Calu3 (cell line): ENCODE measurements at regions of chr13 and their contacts with region 1.

Region 1: GRCh38 chr13:24650161-24650560 is 30.0 kb upstream of the ATP12A start:
- DNase-seq: no peak
- H3K4me3 Mint-ChIP-seq: no peak overlapping the region
- H3K27ac Mint-ChIP-seq: no peak overlapping the region
- H3K4me1 Mint-ChIP-seq: peaks cover 18% of the 10 kb centered on the region
- H3K27me3 Mint-ChIP-seq: no peaks in the 10 kb centered on the region
- CTCF ChIP-seq: no peak

Region 2: GRCh38 chr13:24630851-24631620 is 19.1 kb before region 1 on chr13:
- CTCF ChIA-PET with region 1: interaction called, 3 read pairs
- intact Hi-C with region 1: loop called (anchors 2 kb)
- DNase-seq: peak; percentile 65
- H3K4me3 Mint-ChIP-seq: peak overlapping the region; percentile 13
- H3K27ac Mint-ChIP-seq: peak overlapping the region; percentile 60
- H3K4me1 Mint-ChIP-seq: peaks cover 15% of the 10 kb centered on the region
- H3K27me3 Mint-ChIP-seq: no peaks in the 10 kb centered on the region
- CTCF ChIP-seq: no peak